Common myeloid progenitor, CD34-positive (primary cell): ENCODE measurements at regions of chr10 and their contacts with region 1.

Region 1: DNA sequence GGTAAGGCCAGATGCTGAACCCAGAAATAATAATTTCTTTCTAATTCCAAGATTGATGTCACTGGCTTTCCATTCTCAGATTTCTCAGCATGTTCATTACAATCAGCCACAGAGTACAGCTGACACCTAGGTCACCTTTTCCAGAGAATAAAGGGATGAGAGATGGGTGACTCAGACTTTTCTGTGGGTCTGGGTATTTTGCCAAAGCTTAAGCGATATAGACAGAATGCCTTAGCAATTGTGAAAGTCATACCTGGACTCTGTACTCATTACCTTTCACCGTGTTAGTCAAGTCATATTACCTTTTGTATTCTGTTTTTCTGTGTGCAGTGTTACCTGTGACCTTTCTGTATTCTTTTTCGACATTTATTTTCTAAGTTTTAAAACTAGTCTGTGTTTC is 10.6 kb upstream of the PRTFDC1 start:
- DNase-seq: no peak
- H3K4me3 ChIP-seq: no peak overlapping the region
- H3K27ac ChIP-seq: no peak overlapping the region
- H3K4me1 ChIP-seq: no peaks in the 10 kb centered on the region
- H3K27me3 ChIP-seq: no peaks in the 10 kb centered on the region

Region 2: GRCh38 chr10:24952707-24953645 is 10.0 kb before region 1 on chr10:
- CTCF ChIA-PET with region 1: interaction called, 14 read pairs
- POLR2A ChIA-PET with region 1: no interaction called
- DNase-seq: peak; percentile 42 to 65 (median 55)
- H3K4me3 ChIP-seq: peak overlapping the region; percentile 48 to 86 (median 65)
- H3K27ac ChIP-seq: peak overlapping the region in 1 of 2 experiments; percentile 71
- H3K4me1 ChIP-seq: peaks cover 0 to 18% (median 10%) of the 10 kb centered on the region in 4 experiments
- H3K27me3 ChIP-seq: no peaks in the 10 kb centered on the region

Region 3: GRCh38 chr10:24974976-24975375 is 12.0 kb after region 1 on chr10:
- CTCF ChIA-PET with region 1: no interaction called
- POLR2A ChIA-PET with region 1: no interaction called
- DNase-seq: no peak
- H3K4me3 ChIP-seq: no peak overlapping the region
- H3K27ac ChIP-seq: no peak overlapping the region
- H3K4me1 ChIP-seq: no peaks in the 10 kb centered on the region
- H3K27me3 ChIP-seq: no peaks in the 10 kb centered on the region

Region 4: DNA sequence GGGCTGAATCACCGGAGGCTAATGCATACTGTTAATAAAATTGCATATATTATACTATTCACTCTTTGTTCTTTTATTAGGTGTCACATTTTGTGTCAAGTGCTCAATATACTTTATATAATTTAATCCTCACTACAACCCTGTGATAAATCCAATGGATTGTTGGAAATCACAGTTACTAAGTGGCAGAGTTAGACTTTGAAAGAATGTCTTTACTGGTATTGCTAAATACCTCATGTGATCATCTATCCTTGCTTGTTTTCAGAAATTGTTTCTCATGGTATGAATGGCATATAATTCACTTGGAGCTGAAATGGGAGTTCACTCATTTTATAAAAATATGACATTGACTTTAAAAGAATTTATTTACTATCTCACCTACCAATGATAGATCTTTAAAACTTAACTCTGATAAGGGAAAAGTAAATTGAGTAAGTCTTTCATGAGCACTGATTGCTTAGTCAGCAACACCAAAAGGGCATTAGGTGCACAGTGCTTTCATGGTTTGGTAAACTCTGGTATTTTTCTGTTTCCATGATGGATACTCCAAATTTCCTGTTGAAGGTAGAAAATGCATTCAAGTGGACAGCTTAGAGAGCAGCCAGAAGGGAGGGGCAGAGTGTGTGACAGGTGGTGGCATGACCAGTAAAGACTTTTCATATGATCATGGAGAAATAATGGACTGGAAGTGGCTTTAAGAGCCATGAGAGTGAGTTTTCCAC is 30.4 kb after region 1 on chr10:
- CTCF ChIA-PET with region 1: no interaction called
- POLR2A ChIA-PET with region 1: no interaction called
- DNase-seq: no peak
- H3K4me3 ChIP-seq: no peak overlapping the region
- H3K27ac ChIP-seq: no peak overlapping the region
- H3K4me1 ChIP-seq: peaks cover 0 to 8% (median 7%) of the 10 kb centered on the region in 4 experiments
- H3K27me3 ChIP-seq: no peaks in the 10 kb centered on the region